CD4-positive, alpha-beta T cell (primary cell): ENCODE measurements at regions of chr18 and their contacts with region 1.

Region 1: GRCh38 chr18:21038201-21038600 is 73.4 kb downstream of the ROCK1 start:
- DNase-seq: no peak
- ATAC-seq: no peak
- H3K4me3 ChIP-seq: no peak overlapping the region
- H3K4me3 Mint-ChIP-seq: no peak overlapping the region
- H3K27ac ChIP-seq: no peak overlapping the region
- H3K27ac Mint-ChIP-seq: peak overlapping the region; percentile 30
- H3K4me1 ChIP-seq: no peaks in the 10 kb centered on the region
- H3K4me1 Mint-ChIP-seq: peaks cover 7% of the 10 kb centered on the region
- H3K27me3 ChIP-seq: no peaks in the 10 kb centered on the region
- H3K27me3 Mint-ChIP-seq: no peaks in the 10 kb centered on the region
- CTCF ChIP-seq: no peak

Region 2: GRCh38 chr18:21004726-21005125 is 33.5 kb before region 1 on chr18:
- CTCF ChIA-PET with region 1: interaction called, 4 read pairs
- POLR2A ChIA-PET with region 1: no interaction called
- intact Hi-C with region 1: loop called in 1 of 2 experiments (anchors 5 kb)
- DNase-seq: no peak
- ATAC-seq: no peak
- H3K4me3 ChIP-seq: no peak overlapping the region
- H3K4me3 Mint-ChIP-seq: no peak overlapping the region
- H3K27ac ChIP-seq: no peak overlapping the region
- H3K27ac Mint-ChIP-seq: peak overlapping the region; percentile 2
- H3K4me1 ChIP-seq: no peaks in the 10 kb centered on the region
- H3K4me1 Mint-ChIP-seq: peaks cover 13% of the 10 kb centered on the region
- H3K27me3 ChIP-seq: no peaks in the 10 kb centered on the region
- H3K27me3 Mint-ChIP-seq: no peaks in the 10 kb centered on the region
- CTCF ChIP-seq: no peak